Activated T-helper 1 cell treated with anti-CD3 and anti-CD28 coated beads, Interleukin-12 subunit alpha, Interleukin-12 subunit beta, Interleukin-2, Interleukin-4 antibody, amounts not matched to agents 30 ng/mL and 10 ng/mL and 1 ng/mL, durations not matched to agents 14 hours and 24 hours and 36 hours (primary cell): ENCODE measurements at regions of chr3 and their contacts with region 1.

Region 1: GRCh38 chr3:125055913-125056745 is at the start of gene HEG1:
- DNase-seq: peak; percentile 77
- H3K4me3 Mint-ChIP-seq: peak within 1 kb of the TSS; percentile 97
- H3K27ac Mint-ChIP-seq: peak within 1 kb of the TSS; percentile 87
- H3K4me1 Mint-ChIP-seq: peaks cover 38% of the 10 kb centered on the region
- H3K27me3 Mint-ChIP-seq: peaks cover 18% of the 10 kb centered on the region
- total RNA-seq, gene HEG1: 43.7 and 45.1 TPM in 2 replicates

Region 2: GRCh38 chr3:124995460-124995994 is 60.6 kb before region 1 on chr3:
- intact Hi-C with region 1: loop called (anchors 1 kb)
- DNase-seq: peak; percentile 33
- H3K4me3 Mint-ChIP-seq: no peak overlapping the region
- H3K27ac Mint-ChIP-seq: no peak overlapping the region
- H3K4me1 Mint-ChIP-seq: peaks cover 20% of the 10 kb centered on the region
- H3K27me3 Mint-ChIP-seq: no peaks in the 10 kb centered on the region

Region 3: DNA sequence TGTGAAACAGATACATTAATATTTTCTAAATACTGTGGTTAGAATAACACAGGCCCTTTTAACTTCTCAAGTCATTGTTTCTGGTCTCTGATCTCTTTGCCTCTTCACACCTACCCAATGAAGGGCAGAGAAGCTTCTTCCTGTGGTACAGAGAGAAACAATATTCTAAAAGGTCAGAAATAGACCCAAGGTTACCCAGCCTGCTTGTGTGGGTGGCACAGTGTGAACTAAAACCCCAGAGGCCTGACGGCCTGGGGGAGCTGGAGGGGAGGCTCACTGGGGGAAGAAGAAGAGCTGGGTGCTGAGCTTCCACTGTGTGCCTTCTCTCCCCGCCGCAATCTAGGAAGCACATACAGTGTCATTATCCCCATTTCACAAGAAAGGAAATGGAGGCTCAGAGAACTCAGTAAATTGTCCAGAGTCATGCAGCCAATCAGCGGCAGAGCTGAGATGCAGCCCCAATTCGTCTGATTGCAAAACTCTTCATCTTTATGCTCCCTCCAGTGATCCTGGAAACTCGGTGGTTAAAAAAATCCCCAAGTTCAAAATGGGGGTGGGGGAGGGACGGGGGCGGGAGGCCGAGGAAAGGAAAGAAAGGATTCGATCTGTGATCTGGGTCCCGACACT is 63.7 kb after region 1 on chr3:
- intact Hi-C with region 1: loop called (anchors 1 kb)
- DNase-seq: no peak
- H3K4me3 Mint-ChIP-seq: no peak overlapping the region
- H3K27ac Mint-ChIP-seq: peak overlapping the region; percentile 85
- H3K4me1 Mint-ChIP-seq: peaks cover 55% of the 10 kb centered on the region
- H3K27me3 Mint-ChIP-seq: peaks cover 10% of the 10 kb centered on the region

Region 4: DNA sequence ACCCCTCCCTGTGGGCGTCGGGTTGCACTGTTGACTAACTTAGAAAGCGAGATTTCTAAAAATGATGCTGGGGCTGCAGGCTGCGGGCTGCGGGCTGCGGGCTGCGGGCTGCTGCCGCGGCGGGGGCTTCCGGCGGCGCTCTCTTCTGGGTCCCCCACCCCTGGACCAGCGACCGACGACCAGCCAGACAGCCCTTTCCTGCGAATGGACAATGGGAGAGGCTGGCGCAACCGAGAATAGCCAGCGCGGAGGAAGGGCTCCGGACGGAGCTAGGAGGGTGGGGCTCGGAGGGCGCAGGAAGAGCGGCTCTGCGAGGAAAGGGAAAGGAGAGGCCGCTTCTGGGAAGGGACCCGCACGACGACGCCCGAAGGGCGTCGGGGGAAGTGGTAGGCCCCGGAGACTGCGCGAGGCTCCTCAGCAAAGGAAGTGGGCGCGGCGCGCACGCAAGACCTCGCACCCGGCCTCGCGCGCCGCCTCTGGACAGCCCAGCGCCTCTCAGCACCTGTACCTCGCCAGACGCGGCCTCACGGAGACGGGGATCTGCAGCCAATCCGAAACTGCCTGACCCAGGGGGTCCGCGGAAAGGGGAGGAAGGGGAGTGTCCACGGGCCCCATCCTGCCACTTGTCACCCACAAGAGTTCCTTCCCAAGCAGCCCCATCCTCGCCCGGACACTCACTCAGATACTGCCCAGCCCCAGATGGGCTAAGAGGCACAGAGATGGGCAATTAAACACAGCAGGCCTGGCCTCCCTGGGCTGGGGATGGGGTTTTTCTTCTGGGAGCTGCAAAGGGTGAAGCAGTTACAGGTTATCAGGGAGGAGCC is 85.7 kb after region 1 on chr3:
- intact Hi-C with region 1: loop called (anchors 1 kb)
- DNase-seq: peak; percentile 69
- H3K4me3 Mint-ChIP-seq: peak overlapping the region; percentile 76
- H3K27ac Mint-ChIP-seq: peak overlapping the region; percentile 81
- H3K4me1 Mint-ChIP-seq: peaks cover 61% of the 10 kb centered on the region
- H3K27me3 Mint-ChIP-seq: peaks cover 34% of the 10 kb centered on the region

Region 5: DNA sequence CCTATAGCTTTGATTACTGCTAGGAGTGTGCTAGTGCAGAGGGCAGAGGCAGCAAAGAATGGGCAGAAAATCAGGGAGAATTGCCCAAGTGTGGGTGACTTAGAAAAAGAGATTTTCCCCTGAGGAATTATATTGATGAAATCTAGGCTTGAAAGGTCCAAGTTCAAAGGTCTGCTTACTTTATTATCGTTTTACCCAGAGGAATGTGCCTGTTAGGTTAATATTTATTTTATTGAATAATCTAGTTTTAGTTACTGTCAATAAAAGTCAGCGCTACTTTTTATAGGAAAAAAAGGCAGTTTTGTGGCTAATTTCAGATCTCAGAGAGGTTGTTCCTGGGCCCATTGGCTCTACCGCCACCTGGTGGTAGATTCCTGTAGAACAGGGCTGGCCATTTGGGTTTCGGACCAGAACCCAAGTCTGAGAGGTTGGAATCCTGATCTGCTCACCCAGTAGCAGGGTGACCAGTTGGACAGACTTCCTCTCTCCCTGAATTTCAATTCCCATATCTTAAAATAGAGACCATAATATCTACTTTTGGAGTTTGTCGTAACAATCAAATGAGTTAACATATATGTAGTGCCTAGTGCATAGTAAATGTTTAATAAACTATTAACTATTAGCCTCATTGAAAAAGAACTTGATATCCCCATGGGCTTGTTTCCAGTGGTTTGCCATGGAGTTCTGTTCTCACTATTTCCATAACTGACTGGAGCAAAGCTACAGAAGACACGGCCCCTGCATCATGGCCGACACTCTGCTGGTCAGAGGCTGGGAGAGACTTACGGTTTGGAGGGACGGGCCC is 381.7 kb after region 1 on chr3:
- intact Hi-C with region 1: loop called (anchors 5 kb)
- DNase-seq: peak; percentile 37
- H3K4me3 Mint-ChIP-seq: no peak overlapping the region
- H3K27ac Mint-ChIP-seq: no peak overlapping the region
- H3K4me1 Mint-ChIP-seq: no peaks in the 10 kb centered on the region
- H3K27me3 Mint-ChIP-seq: peaks cover 2% of the 10 kb centered on the region